Common myeloid progenitor, CD34-positive (primary cell): ENCODE measurements at regions of chr11 and their contacts with region 1.

Region 1: DNA sequence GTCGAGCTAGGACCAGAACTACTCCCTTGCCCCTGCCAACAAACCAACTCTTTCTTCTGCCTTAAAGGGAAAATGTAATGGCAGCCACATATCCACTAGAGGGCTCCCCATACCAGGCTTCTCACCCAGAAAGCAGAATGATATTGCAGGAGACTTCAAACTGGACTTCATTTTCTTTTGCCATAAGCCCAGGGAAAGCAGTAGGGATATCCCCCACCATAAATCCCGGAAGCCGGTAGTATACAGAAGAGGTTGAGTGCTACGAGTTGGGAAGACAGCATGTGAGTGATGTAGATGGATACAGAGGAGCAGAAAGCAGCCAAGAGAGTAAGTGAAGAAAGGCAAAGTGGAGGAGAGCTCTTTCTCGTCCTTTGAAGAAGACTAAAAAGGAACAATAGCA is 12.1 kb downstream of the PLAAT5 start:
- DNase-seq: peak; percentile 51 to 78 (median 73)
- H3K4me3 ChIP-seq: no peak overlapping the region
- H3K27ac ChIP-seq: no peak overlapping the region
- H3K4me1 ChIP-seq: peaks cover 0 to 1% (median 0%) of the 10 kb centered on the region in 4 experiments
- H3K27me3 ChIP-seq: peaks cover 0 to 7% (median 0%) of the 10 kb centered on the region in 5 experiments

Region 2: DNA sequence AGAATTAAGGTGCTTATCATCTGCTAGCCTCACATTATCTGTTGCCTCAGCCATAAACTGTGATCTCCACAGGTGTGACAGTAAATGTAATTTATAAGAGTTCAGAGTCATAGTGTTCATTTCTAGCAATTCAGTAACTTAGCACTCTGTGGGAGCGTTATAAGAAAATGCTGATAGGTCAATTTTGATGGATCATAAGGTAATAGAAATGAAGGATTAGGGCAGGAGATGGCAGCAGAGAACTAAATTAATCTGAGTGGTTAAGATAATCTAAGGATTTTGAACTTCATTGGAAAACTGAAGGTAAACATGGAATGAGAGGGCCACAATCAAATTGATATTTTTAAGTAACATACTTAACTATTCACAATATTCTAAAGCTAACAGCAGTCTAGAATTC is 135.8 kb before region 1 on chr11:
- CTCF ChIA-PET with region 1: no interaction called
- POLR2A ChIA-PET with region 1: no interaction called
- DNase-seq: no peak
- H3K4me3 ChIP-seq: no peak overlapping the region
- H3K27ac ChIP-seq: no peak overlapping the region
- H3K4me1 ChIP-seq: no peaks in the 10 kb centered on the region
- H3K27me3 ChIP-seq: no peaks in the 10 kb centered on the region

Region 3: GRCh38 chr11:63490551-63491239 is 11.8 kb after region 1 on chr11 and contains the start of gene PLAAT5:
- CTCF ChIA-PET with region 1: interaction called, 36 read pairs
- POLR2A ChIA-PET with region 1: no interaction called
- DNase-seq: peak in 2 of 3 donors; percentile 49 to 69
- H3K4me3 ChIP-seq: peak within 1 kb of the TSS; percentile 36 to 78 (median 65)
- H3K27ac ChIP-seq: peak within 1 kb of the TSS in 1 of 2 experiments; percentile 35
- H3K4me1 ChIP-seq: peaks cover 11 to 25% (median 16%) of the 10 kb centered on the region in 4 experiments
- H3K27me3 ChIP-seq: peaks cover 0 to 20% (median 13%) of the 10 kb centered on the region in 5 experiments

Region 4: DNA sequence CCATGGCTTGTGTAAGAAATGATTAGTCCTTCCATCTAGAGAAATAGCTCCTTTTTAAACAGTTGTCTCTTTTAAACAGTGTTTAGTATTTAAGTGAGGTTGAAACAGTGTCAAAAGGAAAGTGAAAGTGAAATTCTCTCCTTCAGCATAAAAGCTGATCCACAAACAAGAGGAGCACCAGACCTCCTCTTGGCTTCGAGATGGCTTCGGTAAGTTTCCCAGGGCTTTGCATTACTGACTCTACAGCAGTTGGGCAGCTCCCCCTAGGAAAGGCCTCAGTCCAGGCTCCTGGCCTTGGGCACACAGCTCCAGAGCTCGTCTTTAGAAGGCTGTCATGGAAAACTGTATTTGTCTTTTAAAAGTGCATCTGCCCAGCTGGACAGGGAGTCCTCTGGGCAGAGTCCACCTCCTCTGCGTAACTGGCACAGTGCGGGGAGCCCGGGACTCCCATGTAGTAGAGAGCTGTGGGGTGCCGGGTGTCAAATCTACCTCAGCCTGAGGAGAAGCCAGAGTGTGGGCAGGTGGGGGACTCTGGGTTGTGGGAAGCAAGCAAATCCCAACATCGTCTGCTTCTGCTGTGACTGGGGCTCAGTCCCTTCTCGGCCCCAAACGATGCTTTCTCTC is 57.9 kb after region 1 on chr11 and contains the start of gene PLAAT4:
- CTCF ChIA-PET with region 1: interaction called, 15 read pairs
- POLR2A ChIA-PET with region 1: no interaction called
- DNase-seq: peak; percentile 59 to 81 (median 74)
- H3K4me3 ChIP-seq: peak within 1 kb of the TSS; percentile 40 to 81 (median 73)
- H3K27ac ChIP-seq: peak within 1 kb of the TSS; percentile 12 to 73
- H3K4me1 ChIP-seq: peaks cover 2 to 45% (median 28%) of the 10 kb centered on the region in 4 experiments
- H3K27me3 ChIP-seq: no peaks in the 10 kb centered on the region

Region 5: GRCh38 chr11:63629426-63629825 is 150.5 kb after region 1 on chr11:
- CTCF ChIA-PET with region 1: interaction called, 16 read pairs
- POLR2A ChIA-PET with region 1: interaction called, 3 read pairs
- DNase-seq: no peak
- H3K4me3 ChIP-seq: no peak overlapping the region
- H3K27ac ChIP-seq: no peak overlapping the region
- H3K4me1 ChIP-seq: no peaks in the 10 kb centered on the region
- H3K27me3 ChIP-seq: no peaks in the 10 kb centered on the region

Region 6: GRCh38 chr11:63641727-63642126 is 162.8 kb after region 1 on chr11:
- CTCF ChIA-PET with region 1: interaction called, 88 read pairs
- POLR2A ChIA-PET with region 1: interaction called, 3 read pairs
- DNase-seq: no peak
- H3K4me3 ChIP-seq: no peak overlapping the region
- H3K27ac ChIP-seq: no peak overlapping the region
- H3K4me1 ChIP-seq: no peaks in the 10 kb centered on the region
- H3K27me3 ChIP-seq: no peaks in the 10 kb centered on the region

Region 7: DNA sequence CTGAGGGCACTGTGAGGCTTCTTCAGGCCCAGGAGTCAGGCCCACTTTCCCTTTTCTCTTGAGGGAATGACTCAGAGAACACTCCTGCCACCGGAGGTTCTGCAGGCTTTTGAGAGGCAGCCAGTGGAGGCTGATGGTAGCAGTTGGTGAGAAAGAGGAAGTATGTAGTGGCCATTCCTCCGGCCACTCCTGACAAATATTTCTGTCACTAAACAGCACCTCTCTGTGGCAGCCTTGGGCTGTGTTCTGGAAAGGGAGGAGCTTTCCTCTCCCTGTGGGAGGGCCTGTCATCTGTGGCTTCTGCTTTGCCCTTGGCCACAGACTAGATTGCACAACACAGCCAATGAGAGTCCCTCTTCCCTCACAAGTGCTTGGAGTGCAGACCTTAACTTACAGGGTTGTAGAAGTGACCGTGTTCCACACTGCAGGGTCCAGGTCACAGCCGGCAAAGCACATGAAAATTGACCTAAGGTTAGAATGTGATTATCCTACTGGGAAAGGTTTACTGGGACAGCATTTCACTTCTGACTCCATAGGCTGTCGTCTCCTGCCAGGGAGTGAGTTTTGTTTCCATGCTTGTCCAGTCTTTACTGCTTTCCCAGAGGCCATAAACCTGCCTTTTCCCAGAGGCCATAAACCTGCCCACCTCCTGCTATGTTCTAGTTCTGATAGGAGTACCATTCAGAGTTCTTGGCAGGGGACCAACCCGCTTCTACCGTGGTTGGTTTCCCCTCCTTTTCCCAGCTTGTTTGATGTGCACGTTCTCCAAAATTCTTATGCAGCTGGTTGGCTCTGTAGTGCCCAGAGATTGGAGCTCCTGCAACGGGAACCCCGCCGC is 393.3 kb after region 1 on chr11:
- CTCF ChIA-PET with region 1: no interaction called
- POLR2A ChIA-PET with region 1: no interaction called
- DNase-seq: peak; percentile 84 to 96 (median 96)
- H3K4me3 ChIP-seq: peak overlapping the region in 3 of 7 experiments; percentile 3 to 59 (median 48)
- H3K27ac ChIP-seq: no peak overlapping the region
- H3K4me1 ChIP-seq: peaks cover 17 to 83% (median 76%) of the 10 kb centered on the region in 4 experiments
- H3K27me3 ChIP-seq: no peaks in the 10 kb centered on the region

Region 8: DNA sequence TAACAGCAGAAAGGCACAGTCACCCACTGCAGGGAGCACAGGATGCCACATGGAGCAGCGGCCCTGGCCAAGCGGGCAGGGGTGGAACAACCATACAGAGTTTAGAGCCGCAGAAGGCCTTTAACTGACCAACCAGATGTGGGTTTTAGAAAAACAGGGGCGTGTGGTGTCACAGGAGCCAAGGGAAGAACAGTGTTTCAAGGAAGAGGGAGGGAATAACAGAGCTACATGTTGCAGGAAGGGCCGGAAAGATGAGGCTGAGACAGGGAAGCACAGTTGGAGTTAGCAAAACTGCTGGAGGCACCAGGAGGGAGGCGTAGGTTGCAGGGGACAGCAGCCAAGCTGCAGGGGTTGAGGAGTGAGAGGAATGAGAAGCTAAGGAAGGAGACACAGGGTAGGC is 452.1 kb after region 1 on chr11:
- CTCF ChIA-PET with region 1: no interaction called
- POLR2A ChIA-PET with region 1: no interaction called
- DNase-seq: no peak
- H3K4me3 ChIP-seq: no peak overlapping the region
- H3K27ac ChIP-seq: no peak overlapping the region
- H3K4me1 ChIP-seq: no peaks in the 10 kb centered on the region
- H3K27me3 ChIP-seq: peaks cover 0 to 2% (median 0%) of the 10 kb centered on the region in 5 experiments

Region 9: DNA sequence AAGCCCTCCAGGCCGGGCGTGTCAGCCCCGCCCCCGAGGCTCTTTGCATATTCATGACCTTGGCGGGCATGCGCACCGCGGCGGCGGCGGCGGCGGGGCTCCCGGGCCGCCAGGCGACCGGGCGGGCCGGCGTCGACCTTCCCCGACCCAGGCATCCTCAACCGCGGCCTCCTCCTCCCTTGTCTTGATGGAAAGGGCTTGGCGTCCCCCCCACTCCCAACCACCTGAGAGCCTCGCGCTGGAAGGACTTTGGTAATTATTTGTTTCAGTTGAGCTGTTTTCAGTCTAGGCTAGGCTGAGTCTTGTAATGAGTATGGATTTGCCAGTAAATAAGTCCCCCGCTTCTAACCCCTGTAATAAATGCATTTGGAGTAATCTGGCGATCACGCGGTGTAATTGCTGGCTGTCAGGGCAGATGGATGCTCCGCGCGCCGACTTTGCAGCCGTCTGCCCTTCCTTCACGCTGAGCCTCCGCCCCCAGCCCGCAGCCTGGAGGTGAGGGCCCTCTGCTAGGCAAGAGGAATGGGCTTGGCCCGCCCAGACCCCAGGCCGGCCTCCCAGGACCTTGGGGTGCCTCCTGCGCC is 582.1 kb after region 1 on chr11:
- CTCF ChIA-PET with region 1: no interaction called
- POLR2A ChIA-PET with region 1: no interaction called
- DNase-seq: peak; percentile 31 to 56 (median 49)
- H3K4me3 ChIP-seq: peak overlapping the region in 6 of 7 experiments; percentile 28 to 72 (median 55)
- H3K27ac ChIP-seq: no peak overlapping the region
- H3K4me1 ChIP-seq: peaks cover 0 to 13% (median 8%) of the 10 kb centered on the region in 4 experiments
- H3K27me3 ChIP-seq: peaks cover 0 to 45% (median 19%) of the 10 kb centered on the region in 5 experiments